Naive thymus-derived CD8-positive, alpha-beta T cell (primary cell): ENCODE measurements at regions of chr7 and their contacts with region 1.

Region 1: GRCh38 chr7:152435384-152436110 is at the start of gene KMT2C:
- DNase-seq: peak; percentile 28 to 78 (median 58)
- ATAC-seq: peak; percentile 16 to 17
- H3K4me3 Mint-ChIP-seq: peak within 1 kb of the TSS; percentile 83 to 97 (median 92)
- H3K27ac Mint-ChIP-seq: peak within 1 kb of the TSS; percentile 91 to 97 (median 96)
- H3K4me1 Mint-ChIP-seq: peaks cover 14 to 42% (median 26%) of the 10 kb centered on the region in 4 donors
- H3K27me3 Mint-ChIP-seq: no peaks in the 10 kb centered on the region
- polyA plus RNA-seq, gene KMT2C: 6.7 to 20.9 (median 10.7) TPM

Region 2: DNA sequence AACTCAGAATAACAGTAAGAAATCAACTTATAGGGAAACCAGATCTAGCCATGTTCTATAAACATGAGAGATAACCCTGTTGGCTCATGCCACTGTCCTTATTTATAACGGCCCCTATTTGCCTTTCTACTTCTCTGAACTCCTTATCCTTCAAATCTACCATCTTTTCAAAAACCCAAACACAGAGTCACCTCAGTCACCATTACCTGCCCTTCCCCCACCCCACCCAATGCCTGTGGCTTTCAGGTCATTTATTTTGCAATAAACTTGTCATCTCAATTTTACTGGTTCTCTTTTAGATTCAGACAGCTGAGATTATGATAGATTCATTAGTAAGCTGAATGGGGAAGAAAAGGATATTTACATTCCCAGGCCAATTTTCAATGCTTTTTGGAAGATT is 53.3 kb before region 1 on chr7:
- POLR2A ChIA-PET with region 1: no interaction called
- DNase-seq: no peak
- ATAC-seq: no peak
- H3K4me3 Mint-ChIP-seq: no peak overlapping the region
- H3K27ac Mint-ChIP-seq: no peak overlapping the region
- H3K4me1 Mint-ChIP-seq: peaks cover 17 to 44% (median 37%) of the 10 kb centered on the region in 4 donors
- H3K27me3 Mint-ChIP-seq: no peaks in the 10 kb centered on the region

Region 3: DNA sequence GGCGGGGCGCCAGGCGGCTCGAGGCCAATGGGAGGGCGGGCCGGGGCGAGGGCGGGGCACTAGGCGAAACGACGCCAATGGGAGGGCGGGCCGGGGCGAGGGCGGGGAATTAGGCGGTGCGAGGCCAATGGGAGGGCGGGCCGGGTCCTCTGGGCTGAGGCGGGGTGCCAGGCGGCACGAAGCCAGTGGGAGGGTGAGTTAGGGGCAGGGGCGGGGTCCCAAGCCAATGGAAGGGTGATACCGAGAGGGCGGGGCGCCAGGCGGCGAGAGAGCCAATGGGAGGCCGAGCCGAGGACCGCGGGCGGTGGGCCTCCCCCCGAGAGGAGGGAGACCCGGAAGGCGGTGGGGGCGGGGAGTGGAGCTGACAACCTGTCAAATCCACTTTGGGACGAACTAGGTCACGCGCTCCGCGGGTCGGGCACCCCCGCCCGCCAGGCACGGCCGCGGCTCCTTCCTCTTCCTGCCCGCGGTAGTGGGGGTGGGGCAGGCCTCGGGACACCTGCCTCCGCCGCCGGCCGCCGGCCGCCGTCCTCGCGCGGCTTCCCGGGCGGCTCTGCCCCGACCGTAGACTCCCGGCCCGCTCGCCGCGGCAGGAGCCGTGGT is 28.3 kb after region 1 on chr7:
- POLR2A ChIA-PET with region 1: interaction called, 25 read pairs
- DNase-seq: peak; percentile 96 to 100 (median 100)
- ATAC-seq: peak; percentile 89 to 91
- H3K4me3 Mint-ChIP-seq: peak overlapping the region; percentile 89 to 94 (median 91)
- H3K27ac Mint-ChIP-seq: peak overlapping the region in 7 of 10 donors; percentile 15 to 91 (median 84)
- H3K4me1 Mint-ChIP-seq: peaks cover 0 to 32% (median 8%) of the 10 kb centered on the region in 4 donors
- H3K27me3 Mint-ChIP-seq: no peaks in the 10 kb centered on the region